PC-3 (cell line): ENCODE measurements at regions of chr6 and their contacts with region 1.

Region 1: DNA sequence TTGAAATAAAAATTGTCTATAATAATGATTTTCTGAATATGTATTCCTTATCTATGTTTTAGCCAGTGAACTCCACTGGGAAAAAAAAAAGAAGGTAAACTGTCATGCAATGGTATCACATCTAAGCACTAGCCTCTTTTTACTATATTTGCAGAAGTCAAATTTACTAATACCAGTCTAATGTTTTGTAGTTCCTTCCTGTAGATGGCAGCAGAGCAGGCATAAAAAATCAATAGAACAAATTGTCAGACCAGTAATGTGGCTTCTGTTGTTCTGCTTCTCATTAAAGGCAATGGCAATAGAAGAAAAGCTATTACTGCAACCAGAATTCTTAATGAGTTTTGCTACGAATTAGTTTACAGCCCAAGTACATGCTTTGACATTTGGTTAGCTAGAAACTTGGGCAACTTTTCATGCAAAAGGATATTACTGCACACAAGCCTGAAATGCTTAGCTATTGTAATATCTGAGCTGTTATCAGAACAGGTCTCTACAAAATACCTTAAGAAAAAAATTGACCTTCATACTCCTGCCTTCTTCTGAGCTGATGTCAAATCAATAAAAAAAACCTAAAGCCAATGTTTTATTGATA is 476.9 kb downstream of the KHDRBS2 start:
- DNase-seq: peak; percentile 39
- ATAC-seq: no peak
- H3K4me3 ChIP-seq: no peak overlapping the region
- H3K27ac ChIP-seq: no peak overlapping the region
- H3K4me1 ChIP-seq: no peaks in the 10 kb centered on the region
- H3K27me3 ChIP-seq: no peaks in the 10 kb centered on the region
- CTCF ChIP-seq: peak; percentile 63

Region 2: GRCh38 chr6:62150048-62150663 is 341.1 kb after region 1 on chr6:
- CTCF ChIA-PET with region 1: interaction called, 3 read pairs
- POLR2A ChIA-PET with region 1: no interaction called
- intact Hi-C with region 1: loop called (anchors 1 kb)
- DNase-seq: peak; percentile 47
- ATAC-seq: no peak
- H3K4me3 ChIP-seq: no peak overlapping the region
- H3K27ac ChIP-seq: no peak overlapping the region
- H3K4me1 ChIP-seq: no peaks in the 10 kb centered on the region
- H3K27me3 ChIP-seq: no peaks in the 10 kb centered on the region
- CTCF ChIP-seq: peak; percentile 68

Region 3: DNA sequence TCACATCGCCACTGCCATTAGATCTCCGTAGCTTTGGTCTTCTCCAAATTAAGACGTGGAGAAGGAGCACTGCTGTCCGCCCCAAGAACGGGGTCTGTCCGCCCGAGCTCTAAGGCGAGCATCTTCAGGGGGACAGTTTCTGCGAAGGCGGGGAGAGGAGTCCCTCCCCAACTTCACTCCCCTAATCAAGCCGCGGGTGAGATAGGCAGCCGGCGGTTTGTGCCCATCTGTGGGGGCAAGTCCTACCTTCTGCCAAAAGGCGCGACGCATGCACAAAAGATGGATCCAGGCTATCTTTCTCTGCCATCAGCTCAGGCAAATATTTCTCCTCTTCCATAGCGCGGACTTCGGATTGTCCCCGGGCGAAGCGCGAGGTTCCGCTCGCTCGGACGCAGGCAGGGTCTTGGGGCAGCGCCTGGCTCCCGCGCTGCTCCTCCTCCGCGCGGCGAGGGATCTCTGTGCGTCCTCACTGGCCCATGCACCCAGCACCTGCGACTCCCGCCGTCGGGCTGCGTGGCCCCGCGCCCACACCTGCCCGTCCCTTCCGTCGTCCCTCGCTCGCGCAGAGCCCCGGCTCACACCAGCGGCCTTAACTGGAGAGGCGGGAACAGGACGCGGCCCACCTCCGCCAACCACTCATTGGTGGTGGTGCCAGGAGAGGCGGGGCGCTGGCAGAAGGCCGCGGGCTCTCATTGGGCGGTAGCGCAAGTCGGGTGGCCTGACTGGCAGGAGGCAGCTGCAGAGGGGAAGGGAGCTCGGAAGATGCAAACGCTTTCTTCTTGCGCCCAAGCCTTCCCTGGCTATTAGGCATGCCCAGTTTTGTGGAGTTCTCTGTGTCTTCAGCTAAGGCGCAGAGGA is 476.7 kb after region 1 on chr6 and contains the start of gene KHDRBS2:
- CTCF ChIA-PET with region 1: no interaction called
- POLR2A ChIA-PET with region 1: no interaction called
- intact Hi-C with region 1: loop called (anchors 10 kb)
- DNase-seq: no peak
- ATAC-seq: no peak
- H3K4me3 ChIP-seq: no peak within 1 kb of the TSS
- H3K27ac ChIP-seq: no peak within 1 kb of the TSS
- H3K4me1 ChIP-seq: no peaks in the 10 kb centered on the region
- H3K27me3 ChIP-seq: 0 out of 2 replicates have a peak, but pooled peaks cover 5% of the 10 kb centered on the region
- CTCF ChIP-seq: no peak
- total RNA-seq, gene KHDRBS2: not detected in 2 replicates